Activated naive CD4-positive, alpha-beta T cell treated with anti-CD3 and anti-CD28 coated beads for 36 hours (primary cell): ENCODE measurements at regions of chr15 and their contacts with region 1.

Region 1: GRCh38 chr15:56464893-56465520 is at the start of gene MNS1:
- DNase-seq: peak; percentile 91
- H3K4me3 Mint-ChIP-seq: peak within 1 kb of the TSS; percentile 85
- H3K27ac Mint-ChIP-seq: no peak within 1 kb of the TSS
- H3K4me1 Mint-ChIP-seq: peaks cover 23% of the 10 kb centered on the region
- H3K27me3 Mint-ChIP-seq: peaks cover 18% of the 10 kb centered on the region
- total RNA-seq, gene MNS1: 0.57 to 0.67 TPM

Region 2: DNA sequence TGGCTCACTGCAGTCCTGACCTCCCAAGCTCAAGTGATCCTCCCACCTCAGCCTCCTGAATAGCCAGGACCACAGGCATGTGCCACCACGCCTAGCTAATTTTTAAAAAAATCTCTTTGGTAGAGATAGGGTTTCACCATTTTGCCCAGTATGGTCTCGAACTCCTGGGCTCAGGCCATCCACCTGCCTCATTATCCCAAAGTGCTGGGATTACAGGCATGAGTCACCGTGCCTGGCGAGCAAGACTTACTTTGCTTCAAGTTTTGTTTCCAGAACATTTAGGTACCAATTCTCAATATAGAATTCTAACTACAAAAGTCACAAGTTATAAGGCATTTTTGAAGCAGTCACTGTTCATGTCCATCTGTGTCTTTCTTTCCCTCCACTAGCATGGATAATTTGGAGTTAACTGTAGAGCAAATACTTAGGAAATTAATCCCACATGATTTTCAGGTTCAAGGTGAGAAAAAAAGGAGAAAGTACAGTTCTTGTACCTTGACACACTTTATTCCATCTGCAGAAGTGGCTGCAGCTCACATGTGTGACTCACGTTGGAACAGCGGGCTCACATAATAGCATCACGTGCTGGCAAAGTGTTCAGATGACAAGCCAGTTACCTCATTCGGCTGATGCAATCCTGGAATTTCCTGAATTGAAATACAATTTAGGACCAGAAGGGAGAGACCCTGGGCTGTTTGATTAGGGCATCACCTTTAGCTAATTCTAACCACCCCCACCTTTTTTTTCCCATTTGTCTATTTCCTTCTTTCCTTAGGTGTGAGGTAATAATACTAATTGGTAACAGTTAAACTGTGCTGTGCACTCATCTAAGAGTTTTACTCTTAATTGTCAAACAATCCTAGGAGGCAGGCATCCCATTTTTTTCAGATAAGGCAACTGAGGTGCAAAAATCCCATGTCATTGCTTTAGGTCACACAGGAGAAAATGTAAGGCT is 424.6 kb before region 1 on chr15:
- CTCF ChIA-PET with region 1: no interaction called
- intact Hi-C with region 1: loop called (anchors 5 kb)
- DNase-seq: peak; percentile 73
- H3K4me3 Mint-ChIP-seq: no peak overlapping the region
- H3K27ac Mint-ChIP-seq: peak overlapping the region; percentile 79
- H3K4me1 Mint-ChIP-seq: peaks cover 64% of the 10 kb centered on the region
- H3K27me3 Mint-ChIP-seq: no peaks in the 10 kb centered on the region

Region 3: DNA sequence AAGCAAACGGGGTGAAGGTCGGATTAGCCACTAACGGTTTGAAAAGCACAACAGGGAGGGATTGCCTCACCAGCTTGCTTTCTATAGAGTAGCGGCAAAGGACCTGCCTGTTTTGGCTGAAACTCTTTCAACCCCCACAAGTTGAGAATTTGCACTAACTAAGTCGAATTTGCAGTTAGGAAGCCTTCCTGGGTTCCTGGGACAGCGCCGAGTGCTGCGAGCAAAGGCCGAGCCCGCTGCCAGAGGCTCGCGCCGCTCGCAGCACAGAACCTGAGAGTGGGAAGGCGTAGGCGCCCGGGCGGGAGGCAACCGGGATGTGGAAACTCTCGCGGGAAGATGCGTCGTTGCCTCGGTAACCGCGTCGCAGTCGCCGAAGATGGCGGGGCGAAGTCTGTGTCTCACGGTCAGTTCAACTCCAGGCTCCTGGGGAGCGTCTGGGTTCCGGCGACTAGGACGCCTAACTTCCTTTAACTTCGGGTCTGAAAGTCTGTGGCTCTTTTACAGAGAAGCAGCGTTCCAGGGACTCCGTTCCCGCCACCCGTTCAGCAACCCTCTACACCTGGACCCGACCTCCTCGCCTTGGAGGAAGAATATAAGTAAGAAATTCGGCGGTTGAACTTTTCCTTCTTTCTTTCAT is 99.8 kb before region 1 on chr15 and contains the start of gene TEX9:
- CTCF ChIA-PET with region 1: no interaction called
- intact Hi-C with region 1: loop called (anchors 10 kb)
- DNase-seq: peak; percentile 86
- H3K4me3 Mint-ChIP-seq: peak within 1 kb of the TSS; percentile 75
- H3K27ac Mint-ChIP-seq: no peak within 1 kb of the TSS
- H3K4me1 Mint-ChIP-seq: peaks cover 9% of the 10 kb centered on the region
- H3K27me3 Mint-ChIP-seq: peaks cover 30% of the 10 kb centered on the region
- total RNA-seq, gene TEX9: 1.1 to 1.4 TPM

Region 4: DNA sequence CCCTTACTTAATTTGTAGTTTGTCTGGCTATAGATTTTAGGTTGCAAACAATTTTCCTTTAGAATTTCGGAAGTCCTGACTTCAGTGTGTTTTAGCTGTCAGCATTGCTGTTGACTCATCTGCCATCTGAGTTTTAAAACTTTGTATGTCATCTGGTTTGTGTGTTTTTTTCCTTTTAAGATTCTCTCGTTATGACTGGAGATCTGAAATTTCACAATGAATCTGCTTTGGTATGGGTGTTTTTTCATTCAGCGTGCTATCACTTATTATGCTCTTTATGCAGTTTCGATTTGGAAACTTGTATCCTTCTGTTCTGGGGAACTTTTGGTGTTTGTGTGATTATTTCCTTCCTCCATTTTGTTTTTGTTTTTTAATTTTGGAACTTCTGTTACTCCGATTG is 322.0 kb after region 1 on chr15:
- CTCF ChIA-PET with region 1: no interaction called
- intact Hi-C with region 1: loop called (anchors 10 kb)
- DNase-seq: no peak
- H3K4me3 Mint-ChIP-seq: no peak overlapping the region
- H3K27ac Mint-ChIP-seq: no peak overlapping the region
- H3K4me1 Mint-ChIP-seq: peaks cover 11% of the 10 kb centered on the region
- H3K27me3 Mint-ChIP-seq: peaks cover 6% of the 10 kb centered on the region

Region 5: DNA sequence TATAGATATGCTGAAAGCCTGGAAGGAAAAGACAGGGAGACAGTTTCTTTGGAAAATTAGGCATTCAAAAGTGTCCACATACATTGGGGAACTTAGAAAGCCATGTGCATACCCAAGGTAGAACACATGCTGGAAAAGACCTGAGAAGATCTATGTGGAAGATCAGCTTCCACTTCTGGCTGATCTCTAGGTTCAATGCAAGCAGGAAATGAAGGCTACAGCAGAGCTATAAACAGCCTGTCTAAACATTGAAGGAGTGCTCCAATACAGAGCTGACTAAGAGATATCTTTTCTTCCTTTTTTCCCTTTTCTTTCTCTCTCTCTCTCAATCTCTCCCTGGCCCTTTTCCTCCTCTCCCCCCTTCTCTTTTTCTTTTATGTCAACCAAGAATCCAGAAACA is 379.9 kb after region 1 on chr15:
- CTCF ChIA-PET with region 1: no interaction called
- intact Hi-C with region 1: no loop called
- DNase-seq: no peak
- H3K4me3 Mint-ChIP-seq: no peak overlapping the region
- H3K27ac Mint-ChIP-seq: no peak overlapping the region
- H3K4me1 Mint-ChIP-seq: no peaks in the 10 kb centered on the region
- H3K27me3 Mint-ChIP-seq: no peaks in the 10 kb centered on the region